H1 (cell line): ENCODE measurements at regions of chr1 and their contacts with region 1.

Region 1: DNA sequence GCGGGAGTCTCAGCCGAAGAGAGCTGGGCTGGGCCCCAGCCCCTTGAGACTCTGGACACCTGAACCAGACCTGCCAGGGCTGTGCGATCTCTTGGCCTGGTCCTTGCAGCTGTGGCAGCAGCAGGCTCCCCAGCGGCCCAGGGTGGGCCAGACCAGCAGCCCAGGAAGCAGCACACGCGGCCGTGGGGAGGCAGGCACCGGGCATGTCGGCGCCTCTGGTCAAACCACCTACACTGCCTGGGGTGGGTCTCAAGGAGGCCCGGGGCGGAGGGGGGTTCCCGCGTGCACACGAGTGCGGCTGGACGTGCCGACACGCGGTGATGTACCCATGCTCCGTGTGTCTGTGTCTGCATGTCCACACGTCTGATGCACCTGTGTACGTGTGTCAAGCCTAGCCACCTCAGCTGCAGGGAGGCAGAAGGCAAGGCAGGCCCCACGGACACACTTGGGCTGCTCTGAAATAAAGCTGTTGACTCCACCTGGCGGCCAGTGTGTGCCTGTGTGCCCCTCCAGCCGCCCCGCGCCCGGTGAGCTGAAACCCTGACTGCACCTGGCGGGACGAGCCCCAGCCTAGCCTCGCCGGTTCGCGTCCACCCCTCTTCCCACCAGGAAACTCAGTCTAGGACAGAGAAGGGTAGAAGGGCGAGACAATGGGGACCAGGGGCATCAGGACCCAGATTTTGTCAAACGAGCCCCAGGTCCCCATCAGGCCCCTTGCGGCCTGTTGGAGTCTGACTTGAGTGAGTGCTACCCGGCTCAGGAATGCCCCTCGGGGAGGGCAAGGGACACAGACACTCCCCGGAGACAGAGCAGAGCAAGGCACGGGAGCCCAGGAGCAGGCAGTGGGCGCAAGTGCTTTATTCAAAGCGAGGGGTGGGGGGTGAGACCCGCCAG is 11.6 kb downstream of the SCNN1D start:
- DNase-seq: peak in 1 of 2 experiments; percentile 86
- H3K4me3 ChIP-seq: no peak overlapping the region
- H3K27ac ChIP-seq: no peak overlapping the region
- H3K4me1 ChIP-seq: peaks cover 0 to 8% (median 0%) of the 10 kb centered on the region in 4 experiments; a peak in 2 of 7 replicates
- H3K27me3 ChIP-seq: peaks cover 0 to 3% (median 0%) of the 10 kb centered on the region in 4 experiments; a peak in 1 of 7 replicates
- CTCF ChIP-seq: peak in 2 of 3 experiments; percentile 81 to 87; a peak in 3 of 4 replicates
- EP300 ChIP-seq: no peak
- POLR2A ChIP-seq: no peak
- RAD21 ChIP-seq: peak; percentile 69 to 73

Region 2: GRCh38 chr1:1122078-1122811 is 169.6 kb before region 1 on chr1:
- CTCF ChIA-PET with region 1: interaction called, 25 read pairs
- POLR2A ChIA-PET with region 1: no interaction called
- DNase-seq: peak; percentile 47 to 94
- H3K4me3 ChIP-seq: no peak overlapping the region
- H3K27ac ChIP-seq: no peak overlapping the region
- H3K4me1 ChIP-seq: peaks cover 0 to 3% (median 2%) of the 10 kb centered on the region in 4 experiments; a peak in 4 of 7 replicates
- H3K27me3 ChIP-seq: peaks cover 2 to 16% (median 13%) of the 10 kb centered on the region in 4 experiments; a peak in 6 of 7 replicates
- CTCF ChIP-seq: peak in 2 of 3 experiments; percentile 91 to 95; a peak in 3 of 4 replicates
- EP300 ChIP-seq: no peak
- POLR2A ChIP-seq: no peak
- RAD21 ChIP-seq: peak; percentile 97 to 98

Region 3: DNA sequence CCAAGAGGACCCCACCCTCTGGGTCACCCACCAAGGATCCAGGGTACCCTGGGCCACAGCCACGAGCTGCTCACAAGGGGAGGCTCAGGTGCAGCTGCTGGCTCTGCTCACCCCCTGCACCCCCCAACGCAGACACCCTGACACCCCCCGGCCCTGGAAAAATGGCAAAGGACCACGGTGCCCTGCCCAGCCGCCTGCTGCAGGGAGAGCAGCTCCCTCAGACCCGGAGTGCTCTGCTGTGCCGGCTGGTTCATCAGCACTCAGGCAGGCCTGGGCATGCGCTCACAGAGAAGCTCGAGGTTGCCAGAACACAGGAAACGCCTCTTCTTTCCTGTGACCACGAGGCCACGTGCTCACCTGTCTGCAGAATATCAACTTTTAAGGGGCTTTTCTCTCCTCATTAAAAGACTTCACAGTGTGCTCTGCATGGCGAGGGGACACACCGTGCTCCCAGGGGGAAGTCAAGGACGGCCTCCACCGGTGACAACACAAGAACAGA is 41.0 kb before region 1 on chr1:
- CTCF ChIA-PET with region 1: interaction called, 10 read pairs
- POLR2A ChIA-PET with region 1: no interaction called
- DNase-seq: no peak
- H3K4me3 ChIP-seq: no peak overlapping the region
- H3K27ac ChIP-seq: no peak overlapping the region
- H3K4me1 ChIP-seq: peaks cover 0 to 8% (median under 1%) of the 10 kb centered on the region in 4 experiments; a peak in 5 of 7 replicates
- H3K27me3 ChIP-seq: peaks cover 2 to 16% (median 10%) of the 10 kb centered on the region in 4 experiments; a peak in 6 of 7 replicates
- CTCF ChIP-seq: no peak
- EP300 ChIP-seq: no peak
- POLR2A ChIP-seq: no peak
- RAD21 ChIP-seq: no peak

Region 4: GRCh38 chr1:1264868-1265272 is 26.9 kb before region 1 on chr1:
- CTCF ChIA-PET with region 1: interaction called, 11 read pairs
- POLR2A ChIA-PET with region 1: interaction called, 7 read pairs
- DNase-seq: peak in 1 of 2 experiments; percentile 84
- H3K4me3 ChIP-seq: no peak overlapping the region
- H3K27ac ChIP-seq: no peak overlapping the region
- H3K4me1 ChIP-seq: no peaks in the 10 kb centered on the region
- H3K27me3 ChIP-seq: no peaks in the 10 kb centered on the region
- CTCF ChIP-seq: peak; percentile 68 to 85 (median 69)
- EP300 ChIP-seq: no peak
- POLR2A ChIP-seq: no peak
- RAD21 ChIP-seq: peak; percentile 70 to 72

Region 5: DNA sequence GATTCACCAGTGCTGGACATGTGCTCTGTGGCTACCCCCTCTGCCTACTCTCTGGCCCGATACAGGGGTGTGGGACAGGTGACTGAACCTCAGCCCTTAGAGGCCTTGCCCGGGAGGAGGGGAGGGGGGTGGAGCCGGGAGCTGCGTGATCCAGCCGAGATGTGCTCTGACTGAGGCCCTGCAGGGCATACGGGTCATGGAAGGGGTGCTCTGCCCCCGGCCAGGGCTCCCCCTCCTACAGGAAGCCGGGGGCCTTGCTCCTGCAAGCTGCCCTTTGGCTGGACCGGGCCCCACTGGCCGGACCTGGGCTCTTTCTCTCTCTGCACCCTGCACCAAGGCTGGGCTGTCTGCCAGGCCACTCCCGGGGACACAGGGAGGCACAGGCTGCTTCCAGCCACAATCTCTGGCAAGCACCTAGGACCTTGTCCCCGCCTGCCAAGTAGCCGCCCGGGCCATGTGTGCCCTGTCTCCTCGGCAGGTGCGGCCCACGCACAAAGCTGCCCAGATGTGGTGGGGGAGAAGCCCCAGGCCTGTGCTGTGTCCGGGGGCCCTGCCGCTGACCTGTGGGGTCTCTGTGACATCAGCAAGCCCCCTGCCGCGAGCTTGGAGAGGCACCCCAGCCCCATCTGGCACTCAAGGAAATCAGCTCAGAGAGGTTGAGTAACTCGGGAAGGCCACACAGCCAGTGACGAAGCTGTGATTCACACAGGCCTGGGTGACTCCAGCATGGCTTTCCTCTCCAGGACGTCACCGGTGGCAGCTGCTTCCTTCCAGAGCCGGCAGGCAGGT is 10.1 kb before region 1 on chr1:
- CTCF ChIA-PET with region 1: interaction called, 38 read pairs
- POLR2A ChIA-PET with region 1: interaction called, 3 read pairs
- DNase-seq: no peak
- H3K4me3 ChIP-seq: no peak overlapping the region
- H3K27ac ChIP-seq: no peak overlapping the region
- H3K4me1 ChIP-seq: peaks cover 0 to 2% (median under 1%) of the 10 kb centered on the region in 4 experiments; a peak in 1 of 7 replicates
- H3K27me3 ChIP-seq: no peaks in the 10 kb centered on the region
- CTCF ChIP-seq: no peak
- EP300 ChIP-seq: no peak
- POLR2A ChIP-seq: no peak
- RAD21 ChIP-seq: no peak

Region 6: GRCh38 chr1:1630271-1630964 is 338.6 kb after region 1 on chr1:
- CTCF ChIA-PET with region 1: no interaction called
- POLR2A ChIA-PET with region 1: no interaction called
- DNase-seq: peak; percentile 67 to 89
- H3K4me3 ChIP-seq: peak overlapping the region in 2 of 4 experiments; percentile 14 to 70; a peak in 3 of 8 replicates
- H3K27ac ChIP-seq: no peak overlapping the region
- H3K4me1 ChIP-seq: peaks cover 0 to 6% (median 2%) of the 10 kb centered on the region in 4 experiments; a peak in 4 of 7 replicates
- H3K27me3 ChIP-seq: peaks cover 8 to 23% (median 14%) of the 10 kb centered on the region in 4 experiments; a peak in 6 of 7 replicates
- CTCF ChIP-seq: no peak
- EP300 ChIP-seq: no peak
- POLR2A ChIP-seq: no peak
- RAD21 ChIP-seq: no peak